ENCODE measurements at regions of chr9 and their contacts with region 1.

Region 1: GRCh38 chr9:19255821-19256220 is 25.3 kb downstream of the DENND4C start:
- DNase-seq: no peak
- H3K4me3 ChIP-seq: no peak overlapping the region
- H3K4me3 Mint-ChIP-seq: no peak overlapping the region
- H3K27ac ChIP-seq: no peak overlapping the region
- H3K27ac Mint-ChIP-seq: no peak overlapping the region
- H3K4me1 ChIP-seq: peaks cover 27% of the 10 kb centered on the region
- H3K4me1 Mint-ChIP-seq: peaks cover 43 to 63% (median 53%) of the 10 kb centered on the region in 4 donors
- H3K27me3 ChIP-seq: no peaks in the 10 kb centered on the region
- H3K27me3 Mint-ChIP-seq: no peaks in the 10 kb centered on the region

Region 2: DNA sequence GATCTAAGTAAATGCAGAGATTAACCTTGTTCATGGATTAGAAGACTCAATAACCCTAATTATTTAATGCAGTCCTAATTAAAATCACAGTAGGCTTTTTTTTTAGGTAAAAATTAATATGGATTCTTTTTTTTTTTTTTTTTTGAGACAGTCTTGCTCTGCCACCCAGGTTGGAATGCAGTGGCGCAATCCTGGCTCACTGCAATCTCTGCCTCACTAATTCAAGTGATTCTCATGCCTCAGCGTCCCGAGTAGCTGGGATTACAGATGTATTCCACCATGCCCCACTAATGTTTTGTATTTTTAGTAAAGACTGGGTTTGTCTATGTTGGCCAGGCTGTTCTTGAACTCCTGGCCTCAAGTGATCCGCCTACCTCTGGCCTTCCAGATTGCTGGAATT is 15.3 kb after region 1 on chr9:
- CTCF ChIA-PET with region 1: no interaction called
- POLR2A ChIA-PET with region 1: no interaction called
- intact Hi-C with region 1: loop called (anchors 2 kb)
- DNase-seq: no peak
- H3K4me3 ChIP-seq: no peak overlapping the region
- H3K4me3 Mint-ChIP-seq: no peak overlapping the region
- H3K27ac ChIP-seq: no peak overlapping the region
- H3K27ac Mint-ChIP-seq: no peak overlapping the region
- H3K4me1 ChIP-seq: peaks cover 25% of the 10 kb centered on the region
- H3K4me1 Mint-ChIP-seq: peaks cover 25 to 62% (median 47%) of the 10 kb centered on the region in 4 donors
- H3K27me3 ChIP-seq: no peaks in the 10 kb centered on the region
- H3K27me3 Mint-ChIP-seq: no peaks in the 10 kb centered on the region

Region 3: GRCh38 chr9:19342947-19343346 is 87.1 kb after region 1 on chr9:
- CTCF ChIA-PET with region 1: no interaction called
- POLR2A ChIA-PET with region 1: no interaction called
- intact Hi-C with region 1: no loop called
- DNase-seq: no peak
- H3K4me3 ChIP-seq: no peak overlapping the region
- H3K4me3 Mint-ChIP-seq: no peak overlapping the region
- H3K27ac ChIP-seq: no peak overlapping the region
- H3K27ac Mint-ChIP-seq: no peak overlapping the region
- H3K4me1 ChIP-seq: no peaks in the 10 kb centered on the region
- H3K4me1 Mint-ChIP-seq: no peaks in the 10 kb centered on the region
- H3K27me3 ChIP-seq: no peaks in the 10 kb centered on the region
- H3K27me3 Mint-ChIP-seq: no peaks in the 10 kb centered on the region

Measured in CD4-positive, alpha-beta memory T cell (primary cell).